MCF 10A (cell line): ENCODE measurements at regions of chr5 and their contacts with region 1.

Region 1: GRCh38 chr5:178838695-178839685 is 20.8 kb upstream of the ZNF354B start:
- DNase-seq: peak; percentile 75
- H3K4me3 Mint-ChIP-seq: no peak overlapping the region
- H3K27ac Mint-ChIP-seq: no peak overlapping the region
- H3K4me1 Mint-ChIP-seq: peaks cover 5% of the 10 kb centered on the region
- H3K27me3 Mint-ChIP-seq: no peaks in the 10 kb centered on the region
- CTCF ChIP-seq: peak; percentile 93

Region 2: DNA sequence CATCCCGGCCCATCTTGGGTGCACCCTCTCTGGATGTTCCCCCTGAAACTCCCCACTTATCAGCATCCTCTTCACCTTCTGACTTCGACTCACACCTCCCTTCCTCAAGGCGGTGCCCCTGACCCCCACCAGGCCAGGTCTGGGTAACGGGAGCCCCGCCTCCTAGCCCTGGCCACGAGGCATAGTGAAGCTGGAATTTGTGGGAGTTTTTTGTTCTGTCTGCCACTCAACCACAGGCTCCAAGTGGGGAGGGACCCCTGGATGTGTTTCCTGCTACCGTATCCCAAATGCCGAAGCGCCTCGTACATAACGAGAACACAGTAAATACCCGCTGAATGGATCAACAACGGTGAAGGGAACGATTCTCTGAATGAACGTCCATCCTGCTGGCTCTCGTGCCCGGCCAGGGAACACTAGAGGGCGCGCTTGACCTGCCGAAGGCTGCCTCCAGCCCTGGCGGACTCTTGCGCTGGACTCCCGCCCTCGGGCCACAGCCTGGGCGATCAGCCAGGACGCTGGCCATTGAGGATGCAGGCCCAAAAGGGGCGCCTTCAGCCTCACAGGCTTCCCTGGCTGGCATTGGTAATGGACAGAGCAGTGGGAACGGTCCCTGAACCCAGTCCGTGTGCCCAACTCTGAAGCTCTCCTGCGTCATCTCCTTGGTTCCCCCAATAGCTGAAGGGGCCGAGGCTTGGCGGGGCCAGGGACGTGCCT is 559.1 kb before region 1 on chr5:
- CTCF ChIA-PET with region 1: interaction called, 5 read pairs
- POLR2A ChIA-PET with region 1: no interaction called
- intact Hi-C with region 1: loop called (anchors 1 kb)
- DNase-seq: peak; percentile 87
- H3K4me3 Mint-ChIP-seq: no peak overlapping the region
- H3K27ac Mint-ChIP-seq: no peak overlapping the region
- H3K4me1 Mint-ChIP-seq: peaks cover 30% of the 10 kb centered on the region
- H3K27me3 Mint-ChIP-seq: no peaks in the 10 kb centered on the region
- CTCF ChIP-seq: peak; percentile 99

Region 3: GRCh38 chr5:178461004-178461730 is 377.8 kb before region 1 on chr5:
- CTCF ChIA-PET with region 1: interaction called, 3 read pairs
- POLR2A ChIA-PET with region 1: no interaction called
- intact Hi-C with region 1: loop called (anchors 5 kb)
- DNase-seq: peak; percentile 77
- H3K4me3 Mint-ChIP-seq: no peak overlapping the region
- H3K27ac Mint-ChIP-seq: no peak overlapping the region
- H3K4me1 Mint-ChIP-seq: peaks cover 5% of the 10 kb centered on the region
- H3K27me3 Mint-ChIP-seq: no peaks in the 10 kb centered on the region
- CTCF ChIP-seq: peak; percentile 95

Region 4: DNA sequence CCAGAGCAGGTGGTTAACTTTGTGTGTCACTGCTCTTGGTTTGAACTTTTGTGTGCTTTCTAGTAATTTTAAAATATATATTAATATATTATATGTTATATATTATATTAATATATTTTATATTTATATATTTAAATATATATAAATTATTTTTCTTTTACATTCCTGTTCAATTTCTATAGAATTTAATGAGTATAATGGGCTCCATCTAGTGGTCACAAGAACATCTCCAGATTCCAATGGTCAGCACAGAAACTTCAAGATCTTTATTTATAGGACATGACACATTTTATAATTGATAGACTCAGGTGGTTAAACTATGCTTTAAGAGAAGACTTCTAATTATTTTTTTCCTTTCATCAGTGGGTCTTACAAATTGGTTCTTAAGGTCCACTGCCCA is 287.9 kb before region 1 on chr5:
- CTCF ChIA-PET with region 1: no interaction called
- POLR2A ChIA-PET with region 1: no interaction called
- intact Hi-C with region 1: loop called (anchors 5 kb)
- DNase-seq: peak; percentile 46
- H3K4me3 Mint-ChIP-seq: no peak overlapping the region
- H3K27ac Mint-ChIP-seq: no peak overlapping the region
- H3K4me1 Mint-ChIP-seq: peaks cover 6% of the 10 kb centered on the region
- H3K27me3 Mint-ChIP-seq: no peaks in the 10 kb centered on the region
- CTCF ChIP-seq: peak; percentile 30

Region 5: DNA sequence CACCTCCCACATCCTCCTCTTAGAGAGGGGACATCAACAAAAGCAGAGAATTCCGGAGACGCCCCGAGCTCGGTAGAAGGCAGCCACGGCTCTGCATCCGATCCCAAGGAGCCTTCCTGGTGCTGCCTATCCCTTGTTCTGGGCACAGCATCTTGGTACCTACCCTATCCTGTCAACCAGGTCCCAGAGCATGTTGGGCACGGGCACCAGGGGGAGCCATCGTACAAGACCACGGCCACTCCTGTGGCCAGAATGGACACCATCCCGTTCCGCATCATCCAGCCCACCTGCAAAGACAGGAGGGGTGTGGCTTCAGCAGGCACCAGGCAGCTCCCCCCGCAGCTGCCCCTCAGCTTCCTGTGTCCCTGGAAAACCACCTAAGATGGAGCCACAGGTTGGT is 45.8 kb before region 1 on chr5:
- CTCF ChIA-PET with region 1: interaction called, 8 read pairs
- POLR2A ChIA-PET with region 1: interaction called, 3 read pairs
- intact Hi-C with region 1: loop called (anchors 5 kb)
- DNase-seq: peak; percentile 60
- H3K4me3 Mint-ChIP-seq: no peak overlapping the region
- H3K27ac Mint-ChIP-seq: no peak overlapping the region
- H3K4me1 Mint-ChIP-seq: peaks cover 24% of the 10 kb centered on the region
- H3K27me3 Mint-ChIP-seq: no peaks in the 10 kb centered on the region
- CTCF ChIP-seq: peak; percentile 64

Region 6: GRCh38 chr5:179495906-179496455 is 657.0 kb after region 1 on chr5:
- CTCF ChIA-PET with region 1: interaction called, 4 read pairs
- POLR2A ChIA-PET with region 1: interaction called, 3 read pairs
- intact Hi-C with region 1: loop called (anchors 1 kb)
- DNase-seq: peak; percentile 39
- H3K4me3 Mint-ChIP-seq: no peak overlapping the region
- H3K27ac Mint-ChIP-seq: no peak overlapping the region
- H3K4me1 Mint-ChIP-seq: no peaks in the 10 kb centered on the region
- H3K27me3 Mint-ChIP-seq: no peaks in the 10 kb centered on the region
- CTCF ChIP-seq: peak; percentile 21